ENCODE measurements at regions of chr11 and their contacts with region 1.

Region 1: DNA sequence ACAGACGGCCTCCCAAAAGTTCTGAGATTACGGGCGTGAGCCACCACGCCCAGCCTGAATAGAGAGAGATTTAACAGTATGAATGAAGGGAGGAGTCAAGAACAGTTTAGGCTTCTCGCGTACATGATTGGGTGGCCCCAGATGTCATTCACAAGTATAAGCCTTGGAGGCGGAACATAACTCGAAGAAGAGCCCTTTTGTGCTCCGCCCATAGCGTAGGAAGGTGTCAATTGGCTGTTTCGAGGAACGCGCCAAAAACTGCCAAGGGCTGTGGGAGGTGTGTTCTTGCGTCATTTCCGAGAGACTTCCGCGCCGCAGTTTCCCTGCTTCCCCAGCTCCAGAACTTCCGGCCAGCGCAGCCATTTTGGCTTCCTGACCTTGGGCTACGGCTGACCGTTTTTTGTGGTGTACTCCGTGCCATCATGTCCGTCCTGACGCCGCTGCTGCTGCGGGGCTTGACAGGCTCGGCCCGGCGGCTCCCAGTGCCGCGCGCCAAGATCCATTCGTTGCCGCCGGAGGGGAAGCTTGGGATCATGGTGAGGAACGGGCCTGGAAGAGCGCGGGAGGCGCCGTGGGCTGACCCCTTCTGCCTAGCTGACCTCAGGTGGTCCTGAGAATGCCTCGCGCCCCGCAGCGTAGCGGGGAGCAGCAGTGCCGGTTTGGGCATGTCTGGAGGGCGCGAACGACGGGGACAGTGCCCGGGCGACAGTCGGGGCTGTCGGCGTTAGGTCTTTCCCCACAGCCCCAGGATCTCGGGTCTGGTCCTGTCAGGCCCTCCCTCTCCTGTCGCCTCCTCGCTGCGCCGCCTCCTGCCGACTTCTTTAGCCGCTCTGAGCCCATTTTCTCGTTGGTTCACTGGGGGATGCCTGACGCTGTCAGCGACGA is at the start of gene COX8A:
- DNase-seq: peak; percentile 65 to 97 (median 94)
- ATAC-seq: peak; percentile 99
- H3K4me3 ChIP-seq: peak within 1 kb of the TSS; percentile 87
- H3K4me3 Mint-ChIP-seq: peak within 1 kb of the TSS; percentile 98 to 100 (median 99)
- H3K27ac ChIP-seq: peak within 1 kb of the TSS; percentile 94
- H3K27ac Mint-ChIP-seq: peak within 1 kb of the TSS; percentile 94 to 99 (median 99)
- H3K4me1 ChIP-seq: peaks cover 10 to 11% of the 10 kb centered on the region in 2 donors
- H3K4me1 Mint-ChIP-seq: peaks cover 12 to 36% (median 29%) of the 10 kb centered on the region in 7 donors
- H3K27me3 ChIP-seq: no peaks in the 10 kb centered on the region
- H3K27me3 Mint-ChIP-seq: peaks cover 0 to 2% (median 0%) of the 10 kb centered on the region in 5 donors
- total RNA-seq, gene COX8A: 90.9 to 363 (median 105) TPM

Region 2: DNA sequence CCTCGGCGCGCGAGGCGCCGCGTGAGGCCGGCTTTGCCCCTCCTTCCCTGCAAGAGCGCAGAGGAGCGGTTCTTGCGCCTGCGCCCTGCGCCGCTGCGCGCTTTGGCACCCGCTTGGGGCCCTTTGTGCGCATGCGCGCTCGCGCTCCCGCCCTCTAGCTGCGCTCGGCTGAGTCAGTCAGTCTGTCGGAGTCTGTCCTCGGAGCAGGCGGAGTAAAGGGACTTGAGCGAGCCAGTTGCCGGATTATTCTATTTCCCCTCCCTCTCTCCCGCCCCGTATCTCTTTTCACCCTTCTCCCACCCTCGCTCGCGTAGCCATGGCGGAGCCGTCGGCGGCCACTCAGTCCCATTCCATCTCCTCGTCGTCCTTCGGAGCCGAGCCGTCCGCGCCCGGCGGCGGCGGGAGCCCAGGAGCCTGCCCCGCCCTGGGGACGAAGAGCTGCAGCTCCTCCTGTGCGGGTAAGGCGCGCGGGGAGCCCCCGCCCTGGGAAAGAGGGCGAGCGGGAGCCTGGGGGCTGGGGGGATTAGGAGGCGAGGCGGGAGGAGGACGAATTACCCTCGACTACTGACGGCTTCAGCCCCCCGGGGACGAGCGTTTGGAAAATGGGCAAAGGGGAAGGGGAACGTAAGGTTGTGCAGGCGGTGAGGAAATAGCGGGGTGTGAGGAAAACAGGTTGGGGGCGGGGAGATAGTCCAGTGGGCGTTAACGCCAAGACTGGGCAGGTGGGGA is 293.0 kb before region 1 on chr11 and contains the start of gene RTN3:
- CTCF ChIA-PET with region 1: no interaction called
- POLR2A ChIA-PET with region 1: no interaction called
- intact Hi-C with region 1: loop called in 1 of 2 experiments (anchors 1 kb)
- DNase-seq: peak; percentile 97 to 99 (median 98)
- ATAC-seq: peak; percentile 95
- H3K4me3 ChIP-seq: peak within 1 kb of the TSS; percentile 86
- H3K4me3 Mint-ChIP-seq: peak within 1 kb of the TSS; percentile 89 to 97 (median 94)
- H3K27ac ChIP-seq: peak within 1 kb of the TSS; percentile 69
- H3K27ac Mint-ChIP-seq: peak within 1 kb of the TSS; percentile 50 to 97 (median 83)
- H3K4me1 ChIP-seq: peaks cover 6 to 17% of the 10 kb centered on the region in 2 donors
- H3K4me1 Mint-ChIP-seq: peaks cover 20 to 30% (median 27%) of the 10 kb centered on the region in 7 donors
- H3K27me3 ChIP-seq: no peaks in the 10 kb centered on the region
- H3K27me3 Mint-ChIP-seq: peaks cover 0 to 12% (median 0%) of the 10 kb centered on the region in 5 donors
- total RNA-seq, gene RTN3: 20.8 to 65.7 (median 34.4) TPM

Region 3: DNA sequence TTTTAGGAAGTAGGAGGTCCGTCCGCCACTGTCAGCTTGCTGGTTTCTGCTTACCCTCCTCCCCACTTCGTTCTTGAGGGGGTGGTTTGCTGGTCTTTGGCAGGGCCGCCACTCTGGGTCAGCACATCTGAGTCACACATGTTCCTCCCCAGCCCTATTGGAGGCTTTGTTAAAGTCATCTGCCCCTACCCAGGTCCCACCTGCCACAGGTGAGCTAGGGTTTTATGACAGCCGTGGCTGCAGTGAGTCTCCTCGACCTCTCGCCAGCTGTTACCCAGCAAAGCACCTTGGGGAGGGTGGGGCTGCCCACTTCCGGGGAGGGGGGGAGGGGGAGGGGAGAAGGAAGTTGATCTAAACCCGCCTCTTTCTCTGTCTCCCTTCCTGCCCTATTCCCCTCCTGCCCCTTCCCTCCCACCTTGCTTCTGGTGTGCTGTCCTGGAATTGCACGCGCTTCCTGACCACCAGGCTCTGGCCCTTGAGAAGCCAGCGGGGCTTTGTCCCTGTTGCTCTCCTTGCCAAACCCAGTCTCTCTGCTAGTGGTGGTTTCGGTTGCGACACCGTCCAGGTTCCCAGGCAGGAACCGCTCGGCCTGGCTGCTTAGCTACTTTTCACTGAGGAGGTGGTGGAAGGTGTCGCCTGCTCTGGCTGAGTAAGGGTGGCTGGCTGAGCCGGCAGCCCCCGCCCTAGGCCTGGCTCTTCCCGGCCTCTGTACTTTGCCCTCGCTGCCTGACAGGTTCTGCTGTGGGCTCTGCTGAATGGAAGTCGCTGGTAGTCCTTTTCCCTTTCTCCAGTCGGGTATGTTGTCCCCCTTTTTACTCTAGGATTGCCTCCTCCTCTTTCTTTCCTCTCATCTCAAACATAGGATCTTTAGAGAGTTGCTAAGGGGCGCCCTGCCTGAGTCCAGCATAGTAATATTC is 86.1 kb before region 1 on chr11:
- CTCF ChIA-PET with region 1: no interaction called
- POLR2A ChIA-PET with region 1: no interaction called
- intact Hi-C with region 1: loop called in 1 of 2 experiments (anchors 1 kb)
- DNase-seq: peak; percentile 30 to 75 (median 72)
- ATAC-seq: peak; percentile 89
- H3K4me3 ChIP-seq: peak overlapping the region; percentile 80
- H3K4me3 Mint-ChIP-seq: peak overlapping the region; percentile 89 to 98 (median 95)
- H3K27ac ChIP-seq: peak overlapping the region; percentile 78
- H3K27ac Mint-ChIP-seq: peak overlapping the region; percentile 85 to 98 (median 94)
- H3K4me1 ChIP-seq: peaks cover 49 to 65% of the 10 kb centered on the region in 2 donors
- H3K4me1 Mint-ChIP-seq: peaks cover 58 to 86% (median 82%) of the 10 kb centered on the region in 7 donors
- H3K27me3 ChIP-seq: no peaks in the 10 kb centered on the region
- H3K27me3 Mint-ChIP-seq: no peaks in the 10 kb centered on the region

Region 4: DNA sequence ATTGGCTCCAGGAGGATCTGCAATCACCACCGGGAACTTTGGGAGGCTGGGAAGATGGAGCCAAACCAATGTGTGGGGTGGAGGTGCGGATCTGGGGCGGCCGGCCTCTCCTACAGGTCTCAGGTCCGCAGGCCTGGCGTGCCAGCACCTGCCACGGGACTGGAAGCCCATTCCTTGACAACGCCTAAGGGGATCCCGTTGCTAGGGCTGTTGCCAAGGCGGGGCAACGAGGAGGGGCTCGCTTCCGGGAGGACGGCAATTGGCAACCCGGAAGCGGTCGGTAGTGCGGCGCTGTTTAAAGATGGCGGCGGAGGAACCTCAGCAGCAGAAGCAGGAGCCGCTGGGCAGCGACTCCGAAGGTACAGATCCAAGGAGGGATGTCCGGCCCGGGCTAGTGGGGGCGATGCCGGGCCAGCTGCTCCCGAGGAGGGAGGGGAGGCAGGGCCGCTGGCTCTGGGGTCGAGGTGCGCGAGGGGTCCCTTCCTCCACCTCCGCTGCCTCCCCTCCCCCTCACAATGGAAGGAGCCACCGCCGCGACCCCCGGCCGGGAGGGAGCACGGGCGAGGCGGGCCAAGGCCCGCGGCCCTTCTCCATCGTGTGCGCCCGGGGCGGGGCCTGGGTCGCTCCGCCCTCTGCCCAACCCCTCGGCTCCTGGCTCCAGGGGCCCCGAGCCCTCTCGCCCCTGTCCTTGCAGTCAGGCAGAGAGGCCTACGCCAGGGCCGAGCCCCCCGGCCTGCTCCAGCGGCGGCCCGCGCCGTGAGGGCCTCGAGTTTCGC is 11.8 kb after region 1 on chr11 and contains the start of gene OTUB1:
- CTCF ChIA-PET with region 1: no interaction called
- POLR2A ChIA-PET with region 1: interaction called, 16 read pairs
- intact Hi-C with region 1: loop called (anchors 1 kb)
- DNase-seq: peak; percentile 64 to 86 (median 83)
- ATAC-seq: peak; percentile 94
- H3K4me3 ChIP-seq: peak within 1 kb of the TSS; percentile 100
- H3K4me3 Mint-ChIP-seq: peak within 1 kb of the TSS; percentile 91 to 99 (median 97)
- H3K27ac ChIP-seq: peak within 1 kb of the TSS; percentile 89
- H3K27ac Mint-ChIP-seq: peak within 1 kb of the TSS; percentile 95 to 99 (median 98)
- H3K4me1 ChIP-seq: peaks cover 14 to 20% of the 10 kb centered on the region in 2 donors
- H3K4me1 Mint-ChIP-seq: peaks cover 11 to 40% (median 35%) of the 10 kb centered on the region in 7 donors
- H3K27me3 ChIP-seq: no peaks in the 10 kb centered on the region
- H3K27me3 Mint-ChIP-seq: no peaks in the 10 kb centered on the region
- total RNA-seq, gene OTUB1: 59.4 to 99.0 (median 72.5) TPM

Region 5: GRCh38 chr11:64185816-64186498 is 211.5 kb after region 1 on chr11 and contains the start of gene STIP1:
- CTCF ChIA-PET with region 1: no interaction called
- POLR2A ChIA-PET with region 1: no interaction called
- intact Hi-C with region 1: loop called in 1 of 2 experiments (anchors 1 kb)
- DNase-seq: peak; percentile 87 to 100 (median 99)
- ATAC-seq: peak; percentile 92
- H3K4me3 ChIP-seq: peak within 1 kb of the TSS; percentile 84
- H3K4me3 Mint-ChIP-seq: peak within 1 kb of the TSS in 9 of 10 donors; percentile 88 to 99 (median 96)
- H3K27ac ChIP-seq: peak within 1 kb of the TSS; percentile 82
- H3K27ac Mint-ChIP-seq: peak within 1 kb of the TSS in 7 of 9 donors; percentile 89 to 99 (median 92)
- H3K4me1 ChIP-seq: peaks cover 11 to 28% of the 10 kb centered on the region in 2 donors
- H3K4me1 Mint-ChIP-seq: peaks cover 19 to 58% (median 46%) of the 10 kb centered on the region in 7 donors
- H3K27me3 ChIP-seq: no peaks in the 10 kb centered on the region
- H3K27me3 Mint-ChIP-seq: peaks cover 0 to 6% (median 0%) of the 10 kb centered on the region in 5 donors
- total RNA-seq, gene STIP1: 45.1 to 243 (median 88.8) TPM

Measured in naive thymus-derived CD4-positive, alpha-beta T cell (primary cell).